WTC11 (cell line): ENCODE measurements at regions of chr12 and their contacts with region 1.

Region 1: DNA sequence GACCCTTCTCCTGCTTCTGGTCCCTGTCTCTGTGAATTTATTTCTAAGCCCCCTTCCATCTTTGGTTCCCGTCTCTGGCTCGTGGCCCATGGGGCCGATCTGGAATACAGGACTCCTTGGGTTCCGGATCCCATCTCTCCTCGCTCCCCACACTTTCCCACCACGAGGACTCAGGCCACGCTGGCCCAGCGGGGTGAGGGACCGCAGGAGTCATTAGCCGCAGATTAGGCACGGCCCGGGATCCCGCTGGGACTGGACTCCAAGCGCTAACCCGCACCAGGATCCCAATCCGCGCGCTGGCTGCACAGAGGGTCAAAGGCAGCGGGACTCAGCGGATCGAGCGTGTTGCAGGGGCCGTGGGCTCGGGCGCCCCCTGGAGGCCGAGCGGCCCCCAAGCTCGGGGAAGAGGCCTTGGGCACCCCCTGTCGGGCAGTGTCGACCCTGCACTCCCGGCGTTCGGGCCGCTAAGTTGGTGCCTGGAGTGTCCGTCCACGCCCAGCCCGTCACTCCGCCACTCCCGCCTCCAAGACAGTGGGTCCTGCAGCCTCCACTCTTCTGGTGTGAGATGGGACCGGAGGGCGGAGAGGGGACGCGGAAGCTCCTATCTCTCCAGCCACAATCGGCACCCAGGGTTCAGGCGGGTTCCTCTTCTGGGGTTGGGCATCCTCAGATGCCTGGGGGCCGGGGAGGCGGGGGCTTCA is 9.5 kb downstream of the SHMT2 start:
- DNase-seq: peak; percentile 90
- ATAC-seq: peak; percentile 10
- H3K4me3 Mint-ChIP-seq: peak overlapping the region; percentile 84
- H3K27ac Mint-ChIP-seq: no peak overlapping the region; the same call in 1 of the 2 replicates
- H3K4me1 Mint-ChIP-seq: peaks cover 66% of the 10 kb centered on the region
- H3K27me3 Mint-ChIP-seq: peaks cover 89% of the 10 kb centered on the region
- CTCF ChIP-seq: peak; percentile 100

Region 2: GRCh38 chr12:57088459-57089248 is 150.3 kb before region 1 on chr12 and contains the start of gene NAB2:
- CTCF ChIA-PET with region 1: interaction called, 10 read pairs
- POLR2A ChIA-PET with region 1: no interaction called
- DNase-seq: peak; percentile 91
- ATAC-seq: peak; percentile 46
- H3K4me3 Mint-ChIP-seq: peak within 1 kb of the TSS; percentile 88
- H3K27ac Mint-ChIP-seq: peak within 1 kb of the TSS; percentile 100
- H3K4me1 Mint-ChIP-seq: peaks cover 40% of the 10 kb centered on the region
- H3K27me3 Mint-ChIP-seq: no peaks in the 10 kb centered on the region; the same call in 1 of the 2 replicates
- CTCF ChIP-seq: no peak
- total RNA-seq, gene NAB2: 16.5 to 20.5 TPM (median 17.2 TPM) in 3 replicates

Region 3: DNA sequence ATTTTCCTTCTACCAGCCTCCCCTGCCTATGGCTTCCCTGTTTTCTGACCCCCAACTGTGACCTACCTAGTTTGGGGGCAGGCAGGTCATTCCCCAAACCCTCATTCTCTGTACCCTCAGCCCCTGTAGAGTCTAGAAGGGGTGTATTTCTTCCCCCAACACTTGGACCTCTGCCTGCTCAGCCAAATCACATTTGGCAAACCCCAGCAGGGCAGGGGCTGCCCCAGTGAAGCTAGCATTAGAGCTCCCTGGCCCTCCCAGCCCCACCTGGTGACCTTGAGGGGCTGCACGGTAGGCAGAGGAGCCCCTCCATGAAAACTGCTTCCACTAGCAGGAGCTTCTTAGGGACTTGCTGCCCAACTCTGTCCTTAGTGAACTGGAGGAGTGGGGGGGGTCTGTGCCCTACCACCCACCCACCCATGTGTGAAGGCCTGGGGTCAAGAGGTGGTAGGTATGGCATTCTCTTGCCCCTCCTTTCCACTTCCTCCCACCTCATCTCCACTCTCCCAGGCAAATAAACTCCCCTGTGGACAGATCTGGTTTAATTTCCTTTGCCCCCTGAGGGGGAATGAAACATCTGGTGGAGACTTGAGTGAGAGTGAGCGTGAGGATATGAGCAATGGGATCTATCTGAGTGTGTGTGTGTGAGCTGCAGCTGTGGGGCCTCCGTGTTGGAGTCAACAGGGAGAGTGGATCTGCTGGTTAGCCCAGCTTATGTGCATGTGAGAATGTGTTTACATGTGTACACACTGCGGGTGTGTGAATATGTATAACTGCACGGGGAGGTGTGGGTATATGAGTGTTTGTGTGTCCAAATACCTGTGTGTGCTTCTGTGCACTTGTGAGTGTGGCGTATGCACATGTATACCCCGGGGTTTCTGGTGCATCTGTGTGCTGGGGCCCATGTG is 20.7 kb before region 1 on chr12:
- CTCF ChIA-PET with region 1: interaction called, 660 read pairs
- POLR2A ChIA-PET with region 1: interaction called, 97 read pairs
- DNase-seq: no peak
- ATAC-seq: no peak
- H3K4me3 Mint-ChIP-seq: peak overlapping the region; percentile 78
- H3K27ac Mint-ChIP-seq: no peak overlapping the region
- H3K4me1 Mint-ChIP-seq: peaks cover 63% of the 10 kb centered on the region
- H3K27me3 Mint-ChIP-seq: peaks cover 92% of the 10 kb centered on the region
- CTCF ChIP-seq: no peak

Region 4: DNA sequence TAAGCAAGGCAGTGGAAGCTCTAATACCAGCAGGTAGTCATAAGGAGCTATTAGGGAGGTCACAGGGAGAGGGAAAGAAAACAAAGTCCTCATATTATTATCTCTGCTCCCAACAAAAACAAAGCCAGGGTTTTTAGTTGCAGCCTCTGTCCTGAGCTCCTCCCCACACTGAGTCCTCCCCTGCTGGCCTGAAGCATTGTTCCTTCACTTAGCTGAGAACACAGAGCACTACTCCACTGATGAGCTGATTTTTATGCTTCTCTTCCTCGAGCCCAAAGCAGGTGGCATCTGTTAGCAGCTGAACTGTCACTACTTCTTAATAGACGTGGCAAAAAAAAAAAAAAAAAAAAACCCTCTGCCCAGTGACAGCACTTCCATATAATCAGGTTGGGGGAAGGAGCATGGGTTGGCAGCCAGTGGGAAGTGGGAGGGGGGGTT is 22.4 kb after region 1 on chr12:
- CTCF ChIA-PET with region 1: interaction called, 21 read pairs
- POLR2A ChIA-PET with region 1: interaction called, 5 read pairs
- DNase-seq: no peak
- ATAC-seq: peak; percentile 73
- H3K4me3 Mint-ChIP-seq: no peak overlapping the region
- H3K27ac Mint-ChIP-seq: no peak overlapping the region
- H3K4me1 Mint-ChIP-seq: peaks cover 12% of the 10 kb centered on the region
- H3K27me3 Mint-ChIP-seq: no peaks in the 10 kb centered on the region
- CTCF ChIP-seq: no peak

Region 5: GRCh38 chr12:57276935-57277563 is 38.0 kb after region 1 on chr12:
- CTCF ChIA-PET with region 1: interaction called, 14 read pairs
- POLR2A ChIA-PET with region 1: no interaction called
- DNase-seq: peak; percentile 46
- ATAC-seq: peak; percentile 57
- H3K4me3 Mint-ChIP-seq: no peak overlapping the region
- H3K27ac Mint-ChIP-seq: no peak overlapping the region
- H3K4me1 Mint-ChIP-seq: peaks cover 13% of the 10 kb centered on the region
- H3K27me3 Mint-ChIP-seq: no peaks in the 10 kb centered on the region
- CTCF ChIP-seq: no peak

Region 6: DNA sequence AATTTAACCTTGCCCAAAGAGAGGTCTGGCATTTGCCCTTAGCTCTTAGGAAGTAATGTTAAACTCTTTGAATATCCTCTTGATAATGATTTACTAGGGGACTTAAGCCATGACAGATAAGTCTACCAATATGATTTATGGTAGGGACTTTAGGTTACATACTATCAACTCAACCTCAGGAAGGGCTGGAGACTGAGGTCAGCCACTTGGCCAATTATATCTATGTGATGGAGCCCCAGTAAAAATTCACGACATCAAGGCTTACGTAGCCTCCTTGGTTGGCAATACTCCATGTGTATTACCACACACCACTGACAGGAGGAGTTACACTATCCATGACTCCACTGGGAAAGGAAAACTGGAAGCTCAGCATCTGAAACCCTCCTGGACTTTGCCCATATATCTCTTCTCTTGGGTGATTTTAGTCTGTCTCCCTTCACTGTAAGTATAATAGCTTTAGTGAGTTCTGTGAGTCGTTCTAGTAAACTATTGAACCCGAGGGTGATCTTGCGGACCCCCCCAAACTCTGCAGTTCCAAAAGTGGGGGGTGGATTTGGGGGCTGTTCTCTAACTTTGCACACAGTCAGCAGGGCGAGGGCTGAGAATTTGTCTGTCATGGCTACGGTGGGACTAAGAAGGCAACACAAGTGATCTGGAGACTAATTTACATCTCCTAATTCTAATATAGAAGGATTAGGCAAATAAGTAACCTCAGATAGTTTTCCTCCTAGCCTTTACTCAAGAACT is 129.5 kb after region 1 on chr12:
- CTCF ChIA-PET with region 1: no interaction called
- POLR2A ChIA-PET with region 1: no interaction called
- DNase-seq: no peak
- ATAC-seq: peak; percentile 65
- H3K4me3 Mint-ChIP-seq: no peak overlapping the region
- H3K27ac Mint-ChIP-seq: 0 out of 2 replicates have a peak overlapping the region, but pooled peaks have one; percentile 46
- H3K4me1 Mint-ChIP-seq: no peaks in the 10 kb centered on the region
- H3K27me3 Mint-ChIP-seq: peaks cover 5% of the 10 kb centered on the region
- CTCF ChIP-seq: no peak